Posterior cingulate gyrus (tissue), 11 donors: ENCODE measurements at regions of chr1 and their contacts with region 1.

Region 1: GRCh38 chr1:37859507-37860345 is at the start of gene MTF1:
- DNase-seq: peak; percentile 93 to 99 (median 98)

Region 2: GRCh38 chr1:37807555-37808368 is 52.0 kb before region 1 on chr1 and contains the starts of genes C1orf122 and YRDC:
- intact Hi-C with region 1: loop called (anchors 1 kb)
- DNase-seq: peak; percentile 96 to 99 (median 96)